ENCODE measurements at regions of chr9 and their contacts with region 1.

Region 1: GRCh38 chr9:122453677-122454135 is 24.0 kb downstream of the OR1J1 start:
- DNase-seq: no peak
- H3K4me3 Mint-ChIP-seq: no peak overlapping the region
- H3K27ac Mint-ChIP-seq: no peak overlapping the region
- H3K4me1 Mint-ChIP-seq: peaks cover 2% of the 10 kb centered on the region
- H3K27me3 Mint-ChIP-seq: peaks cover 20% of the 10 kb centered on the region

Region 2: DNA sequence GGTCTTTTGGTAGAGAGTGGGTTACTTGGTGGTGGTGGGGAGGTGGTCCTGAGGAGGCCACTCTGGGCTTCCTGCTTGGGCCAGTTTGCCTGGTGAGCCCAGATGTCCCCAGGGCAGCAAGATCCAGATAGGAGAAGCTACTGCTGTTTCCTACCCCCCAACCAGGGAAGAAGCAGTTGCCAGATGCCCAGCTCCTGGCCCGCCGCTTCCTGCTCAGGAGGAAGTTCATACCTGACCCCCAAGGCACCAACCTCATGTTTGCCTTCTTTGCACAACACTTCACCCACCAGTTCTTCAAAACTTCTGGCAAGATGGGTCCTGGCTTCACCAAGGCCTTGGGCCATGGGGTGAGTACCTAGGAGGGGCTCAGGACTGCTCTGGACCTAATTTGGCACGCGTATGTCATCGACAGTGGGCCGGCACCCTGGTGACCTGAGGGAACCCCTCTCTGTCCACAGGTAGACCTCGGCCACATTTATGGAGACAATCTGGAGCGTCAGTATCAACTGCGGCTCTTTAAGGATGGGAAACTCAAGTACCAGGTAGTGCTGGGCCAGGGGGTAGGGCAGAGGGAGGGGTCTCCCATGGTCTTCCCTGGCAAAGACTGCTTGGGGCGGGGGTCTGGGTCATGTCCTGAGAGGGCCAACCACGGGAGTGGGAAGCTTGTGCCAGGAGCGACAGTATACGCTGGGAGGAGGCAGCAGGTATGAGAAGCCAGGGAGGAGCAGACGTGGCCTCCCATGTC is 72.3 kb before region 1 on chr9:
- intact Hi-C with region 1: loop called (anchors 2 kb)
- DNase-seq: no peak
- H3K4me3 Mint-ChIP-seq: no peak overlapping the region
- H3K27ac Mint-ChIP-seq: no peak overlapping the region
- H3K4me1 Mint-ChIP-seq: peaks cover 9% of the 10 kb centered on the region
- H3K27me3 Mint-ChIP-seq: no peaks in the 10 kb centered on the region